GM18951 (cell line): ENCODE measurements at regions of chr5 and their contacts with region 1.

Region 1: GRCh38 chr5:87780831-87781760 is 368.4 kb upstream of the CCNH start:
- POLR2A ChIP-seq: no peak

Region 2: DNA sequence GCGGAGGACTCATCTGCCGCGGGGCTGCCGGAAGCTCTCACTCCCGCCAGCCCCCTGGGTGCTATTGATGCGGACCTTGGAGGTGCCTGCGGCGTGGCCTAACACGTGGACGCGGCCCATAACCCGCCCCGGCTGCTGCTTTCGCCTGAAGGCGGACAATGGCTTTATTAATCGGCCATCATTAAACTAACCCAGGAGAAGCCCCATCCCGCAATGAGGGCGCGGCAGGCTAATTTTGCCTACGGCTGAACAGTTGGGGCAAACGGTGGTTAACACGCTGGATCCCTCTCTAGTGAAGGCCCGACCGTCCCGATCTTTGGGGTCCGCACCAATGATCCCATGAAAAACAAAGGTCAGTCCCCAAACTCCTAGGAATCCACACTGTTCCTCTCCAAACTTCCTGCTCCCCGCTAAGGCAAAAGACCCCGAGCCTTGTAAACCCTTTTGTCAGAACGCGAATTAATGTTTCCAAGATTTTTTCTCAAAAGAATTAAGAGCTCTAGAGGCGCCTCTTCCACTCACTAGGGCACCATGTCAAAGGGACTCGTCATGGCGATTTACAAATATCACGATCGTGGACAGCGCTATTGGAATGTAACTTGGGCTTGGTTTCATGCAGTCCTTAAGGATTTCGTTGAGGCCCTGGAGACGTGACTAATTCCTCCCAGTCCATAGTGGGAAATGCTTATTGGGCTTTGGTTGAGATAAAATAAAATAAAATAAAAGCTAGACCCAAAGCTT is 908.7 kb after region 1 on chr5:
- in situ Hi-C with region 1: loop called (anchors 5 kb)
- POLR2A ChIP-seq: no peak